WTC11 (cell line): ENCODE measurements at regions of chr12 and their contacts with region 1.

Region 1: GRCh38 chr12:125220404-125220803 is 155.2 kb downstream of the AACS start:
- DNase-seq: no peak
- ATAC-seq: no peak
- H3K4me3 Mint-ChIP-seq: no peak overlapping the region
- H3K27ac Mint-ChIP-seq: no peak overlapping the region
- H3K4me1 Mint-ChIP-seq: peaks cover 31% of the 10 kb centered on the region
- H3K27me3 Mint-ChIP-seq: no peaks in the 10 kb centered on the region
- CTCF ChIP-seq: no peak

Region 2: DNA sequence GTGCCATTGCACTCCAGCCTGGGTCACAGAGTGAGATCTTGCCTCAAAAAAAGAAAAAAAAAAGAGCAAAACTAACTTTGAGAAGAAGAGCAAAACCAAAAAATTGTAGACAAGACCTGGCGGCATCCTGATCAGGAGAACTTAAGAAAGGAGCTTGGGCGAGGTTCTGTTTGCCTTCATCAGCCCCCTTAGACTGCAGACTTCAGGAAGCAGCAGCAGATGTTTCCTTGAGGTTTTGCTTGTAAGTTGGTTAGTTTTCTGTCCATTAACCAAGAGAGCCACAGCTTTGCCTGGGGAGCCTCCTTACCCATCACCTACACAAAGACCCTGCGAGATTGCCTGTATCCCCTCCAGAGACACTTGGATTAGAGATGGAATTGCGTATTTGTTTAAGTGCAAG is 33.8 kb after region 1 on chr12:
- CTCF ChIA-PET with region 1: no interaction called
- POLR2A ChIA-PET with region 1: interaction called, 10 read pairs
- DNase-seq: no peak
- ATAC-seq: no peak
- H3K4me3 Mint-ChIP-seq: no peak overlapping the region
- H3K27ac Mint-ChIP-seq: no peak overlapping the region
- H3K4me1 Mint-ChIP-seq: peaks cover 16% of the 10 kb centered on the region
- H3K27me3 Mint-ChIP-seq: no peaks in the 10 kb centered on the region
- CTCF ChIP-seq: no peak